CD4-positive, alpha-beta memory T cell (primary cell): ENCODE measurements at regions of chr3 and their contacts with region 1.

Region 1: GRCh38 chr3:49839193-49839809 is 17.1 kb downstream of the TRAIP start:
- DNase-seq: peak; percentile 75 to 81 (median 78)
- H3K4me3 ChIP-seq: no peak overlapping the region
- H3K4me3 Mint-ChIP-seq: no peak overlapping the region
- H3K27ac ChIP-seq: no peak overlapping the region
- H3K27ac Mint-ChIP-seq: no peak overlapping the region
- H3K4me1 ChIP-seq: no peaks in the 10 kb centered on the region
- H3K4me1 Mint-ChIP-seq: peaks cover 0 to 2% (median under 1%) of the 10 kb centered on the region in 4 donors
- H3K27me3 ChIP-seq: no peaks in the 10 kb centered on the region
- H3K27me3 Mint-ChIP-seq: no peaks in the 10 kb centered on the region

Region 2: GRCh38 chr3:49703443-49703927 is 135.8 kb before region 1 on chr3:
- CTCF ChIA-PET with region 1: interaction called, 23 read pairs
- POLR2A ChIA-PET with region 1: no interaction called
- intact Hi-C with region 1: no loop called
- DNase-seq: peak; percentile 66 to 72 (median 68)
- H3K4me3 ChIP-seq: no peak overlapping the region
- H3K4me3 Mint-ChIP-seq: no peak overlapping the region
- H3K27ac ChIP-seq: no peak overlapping the region
- H3K27ac Mint-ChIP-seq: peak overlapping the region in 4 of 7 donors; percentile 41 to 75 (median 66)
- H3K4me1 ChIP-seq: no peaks in the 10 kb centered on the region
- H3K4me1 Mint-ChIP-seq: peaks cover 0 to 9% (median 5%) of the 10 kb centered on the region in 4 donors
- H3K27me3 ChIP-seq: no peaks in the 10 kb centered on the region
- H3K27me3 Mint-ChIP-seq: no peaks in the 10 kb centered on the region

Region 3: DNA sequence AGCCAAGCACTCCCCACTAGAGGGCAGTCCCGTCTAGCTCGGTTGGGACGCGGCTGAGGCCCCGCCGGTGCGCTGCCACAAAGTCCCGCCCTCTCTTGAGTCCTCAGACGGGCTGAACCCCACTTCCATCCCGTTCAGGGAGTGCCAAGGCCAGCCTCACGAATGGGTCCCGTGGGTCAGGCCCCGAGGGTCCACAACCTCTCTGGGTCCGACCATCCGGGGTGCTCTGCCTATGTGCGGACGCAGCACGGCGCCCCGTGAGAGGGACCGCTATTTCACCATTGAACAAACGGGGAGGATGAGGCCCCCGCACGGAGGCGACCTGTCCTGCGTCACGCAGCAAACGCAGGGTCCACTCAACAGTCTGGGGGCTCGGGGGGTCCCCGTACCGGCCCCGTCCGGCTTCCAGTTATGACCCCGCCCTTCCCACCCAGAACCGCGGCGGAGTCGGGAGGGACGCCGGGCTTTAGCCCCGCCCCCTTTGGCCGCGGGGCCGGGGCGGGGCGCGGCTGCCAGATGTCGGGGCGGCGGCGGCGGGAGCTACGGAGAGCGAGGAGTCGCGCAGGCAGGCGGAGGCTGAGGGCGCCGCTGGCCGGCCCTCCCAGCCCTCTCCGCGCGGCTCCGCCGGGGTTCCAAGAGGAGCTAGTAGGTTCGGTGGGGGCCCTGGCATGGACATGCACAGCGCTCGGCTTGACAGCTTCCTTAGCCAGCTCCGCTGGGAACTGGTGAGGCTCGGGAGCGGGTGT is 36.4 kb before region 1 on chr3 and contains the start of gene INKA1:
- CTCF ChIA-PET with region 1: interaction called, 310 read pairs
- POLR2A ChIA-PET with region 1: interaction called, 121 read pairs
- intact Hi-C with region 1: loop called (anchors 1 kb)
- DNase-seq: peak; percentile 86 to 88 (median 88)
- H3K4me3 ChIP-seq: peak within 1 kb of the TSS; percentile 74 to 84
- H3K4me3 Mint-ChIP-seq: peak within 1 kb of the TSS; percentile 89 to 94 (median 92)
- H3K27ac ChIP-seq: peak within 1 kb of the TSS; percentile 78
- H3K27ac Mint-ChIP-seq: peak within 1 kb of the TSS; percentile 87 to 98 (median 95)
- H3K4me1 ChIP-seq: peaks cover 32% of the 10 kb centered on the region
- H3K4me1 Mint-ChIP-seq: peaks cover 18 to 50% (median 33%) of the 10 kb centered on the region in 4 donors
- H3K27me3 ChIP-seq: no peaks in the 10 kb centered on the region
- H3K27me3 Mint-ChIP-seq: peaks cover 0 to 4% of the 10 kb centered on the region in 2 donors
- total RNA-seq, gene INKA1: 0.55 to 1.2 TPM

Region 4: DNA sequence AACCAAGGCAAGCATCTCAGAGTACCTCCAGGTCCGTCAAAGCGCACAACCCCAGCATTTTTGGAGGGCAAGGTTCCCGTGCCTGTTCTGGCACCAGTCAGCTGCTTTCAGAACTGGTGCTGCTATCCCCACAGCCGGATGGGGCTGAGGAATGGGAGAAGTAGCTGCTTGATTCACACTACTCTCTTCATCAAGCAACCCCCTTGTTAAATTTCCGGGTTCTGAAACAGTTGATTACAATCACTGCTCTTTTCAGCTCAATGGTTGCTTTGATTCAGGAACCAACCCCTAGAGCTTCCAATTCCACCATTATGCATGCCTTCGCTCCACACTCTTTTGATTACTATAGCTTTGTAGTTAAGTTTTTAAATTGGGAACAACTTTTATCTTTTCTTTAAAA is 13.3 kb before region 1 on chr3:
- CTCF ChIA-PET with region 1: interaction called, 15 read pairs
- POLR2A ChIA-PET with region 1: interaction called, 3 read pairs
- intact Hi-C with region 1: no loop called
- DNase-seq: no peak
- H3K4me3 ChIP-seq: no peak overlapping the region
- H3K4me3 Mint-ChIP-seq: no peak overlapping the region
- H3K27ac ChIP-seq: no peak overlapping the region
- H3K27ac Mint-ChIP-seq: no peak overlapping the region
- H3K4me1 ChIP-seq: no peaks in the 10 kb centered on the region
- H3K4me1 Mint-ChIP-seq: no peaks in the 10 kb centered on the region
- H3K27me3 ChIP-seq: no peaks in the 10 kb centered on the region
- H3K27me3 Mint-ChIP-seq: no peaks in the 10 kb centered on the region

Region 5: DNA sequence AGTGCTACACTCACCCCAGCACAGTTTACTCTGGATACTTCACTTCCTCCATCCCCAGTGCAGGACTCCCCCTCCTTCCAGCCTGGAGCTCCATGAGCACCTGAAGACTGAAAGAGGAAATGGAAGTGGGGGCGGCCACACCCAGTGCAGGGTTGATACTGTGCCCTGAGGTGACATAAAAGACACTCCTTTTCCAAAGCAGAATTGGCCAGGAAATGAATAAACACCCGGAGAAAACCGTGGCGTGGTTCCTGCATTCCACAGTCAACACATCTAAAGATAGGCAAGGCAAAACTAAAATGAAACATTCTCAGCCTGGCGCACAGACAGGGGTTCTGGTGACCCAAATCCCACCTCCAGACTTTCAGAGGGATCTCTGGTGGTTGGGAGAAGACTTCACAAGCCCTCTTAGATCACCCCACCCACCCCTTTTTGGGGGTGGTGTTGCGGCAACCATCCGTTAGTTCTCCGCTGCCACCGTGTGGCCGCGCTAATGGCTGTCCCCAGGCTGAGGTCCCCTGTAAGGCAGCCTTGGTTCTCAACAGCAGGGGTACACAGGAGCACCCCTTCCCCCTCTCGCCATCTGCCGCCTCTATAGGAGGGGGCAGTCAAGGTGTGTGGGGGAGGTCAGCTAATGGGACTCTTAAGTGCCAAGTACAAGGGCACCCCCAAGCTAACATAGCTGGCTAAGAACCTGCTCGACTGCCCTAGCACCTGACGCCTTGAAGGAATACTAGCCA is 66.9 kb after region 1 on chr3:
- CTCF ChIA-PET with region 1: interaction called, 4 read pairs
- POLR2A ChIA-PET with region 1: no interaction called
- intact Hi-C with region 1: loop called (anchors 5 kb)
- DNase-seq: peak; percentile 39 to 64 (median 41)
- H3K4me3 ChIP-seq: peak overlapping the region in 1 of 2 donors; percentile 4
- H3K4me3 Mint-ChIP-seq: peak overlapping the region; percentile 48 to 82 (median 62)
- H3K27ac ChIP-seq: peak overlapping the region; percentile 40
- H3K27ac Mint-ChIP-seq: peak overlapping the region; percentile 77 to 92 (median 87)
- H3K4me1 ChIP-seq: peaks cover 35% of the 10 kb centered on the region
- H3K4me1 Mint-ChIP-seq: peaks cover 15 to 36% (median 25%) of the 10 kb centered on the region in 4 donors
- H3K27me3 ChIP-seq: no peaks in the 10 kb centered on the region
- H3K27me3 Mint-ChIP-seq: no peaks in the 10 kb centered on the region

Region 6: GRCh38 chr3:50850639-50851511 is 1011.6 kb after region 1 on chr3:
- CTCF ChIA-PET with region 1: no interaction called
- POLR2A ChIA-PET with region 1: no interaction called
- intact Hi-C with region 1: no loop called
- DNase-seq: no peak
- H3K4me3 ChIP-seq: no peak overlapping the region
- H3K4me3 Mint-ChIP-seq: no peak overlapping the region
- H3K27ac ChIP-seq: no peak overlapping the region
- H3K27ac Mint-ChIP-seq: no peak overlapping the region
- H3K4me1 ChIP-seq: no peaks in the 10 kb centered on the region
- H3K4me1 Mint-ChIP-seq: peaks cover 0 to 2% (median 0%) of the 10 kb centered on the region in 4 donors
- H3K27me3 ChIP-seq: no peaks in the 10 kb centered on the region
- H3K27me3 Mint-ChIP-seq: peaks cover 6 to 7% of the 10 kb centered on the region in 2 donors